Sigmoid colon (tissue), 7 donors: ENCODE measurements at regions of chr20 and their contacts with region 1.

Region 1: GRCh38 chr20:62143118-62143973 is at the starts of genes PSMA7 and SS18L1:
- DNase-seq: peak; percentile 93
- H3K4me3 ChIP-seq: peak within 1 kb of the TSS; percentile 71 to 92 (median 90)
- H3K27ac ChIP-seq: peak within 1 kb of the TSS; percentile 92 to 97 (median 96)
- H3K4me1 ChIP-seq: peaks cover 0 to 45% (median 36%) of the 10 kb centered on the region in 4 donors
- H3K27me3 ChIP-seq: no peaks in the 10 kb centered on the region
- CTCF ChIP-seq: no peak
- EP300 ChIP-seq: no peak
- POLR2A ChIP-seq: peak; percentile 58 to 73
- total RNA-seq, gene PSMA7: 192 to 388 (median 313) TPM
- total RNA-seq, gene SS18L1: 7.2 to 11.7 (median 11.1) TPM

Region 2: GRCh38 chr20:62065669-62066338 is 77.5 kb before region 1 on chr20 and contains the start of gene TAF4:
- intact Hi-C with region 1: loop called (anchors 2 kb)
- DNase-seq: peak; percentile 87
- H3K4me3 ChIP-seq: peak within 1 kb of the TSS; percentile 51 to 73 (median 72)
- H3K27ac ChIP-seq: peak within 1 kb of the TSS; percentile 85 to 91 (median 88)
- H3K4me1 ChIP-seq: peaks cover 0 to 59% (median 49%) of the 10 kb centered on the region in 4 donors
- H3K27me3 ChIP-seq: no peaks in the 10 kb centered on the region
- CTCF ChIP-seq: no peak
- EP300 ChIP-seq: no peak
- POLR2A ChIP-seq: no peak
- total RNA-seq, gene TAF4: 8.0 to 13.3 (median 10.9) TPM

Region 3: DNA sequence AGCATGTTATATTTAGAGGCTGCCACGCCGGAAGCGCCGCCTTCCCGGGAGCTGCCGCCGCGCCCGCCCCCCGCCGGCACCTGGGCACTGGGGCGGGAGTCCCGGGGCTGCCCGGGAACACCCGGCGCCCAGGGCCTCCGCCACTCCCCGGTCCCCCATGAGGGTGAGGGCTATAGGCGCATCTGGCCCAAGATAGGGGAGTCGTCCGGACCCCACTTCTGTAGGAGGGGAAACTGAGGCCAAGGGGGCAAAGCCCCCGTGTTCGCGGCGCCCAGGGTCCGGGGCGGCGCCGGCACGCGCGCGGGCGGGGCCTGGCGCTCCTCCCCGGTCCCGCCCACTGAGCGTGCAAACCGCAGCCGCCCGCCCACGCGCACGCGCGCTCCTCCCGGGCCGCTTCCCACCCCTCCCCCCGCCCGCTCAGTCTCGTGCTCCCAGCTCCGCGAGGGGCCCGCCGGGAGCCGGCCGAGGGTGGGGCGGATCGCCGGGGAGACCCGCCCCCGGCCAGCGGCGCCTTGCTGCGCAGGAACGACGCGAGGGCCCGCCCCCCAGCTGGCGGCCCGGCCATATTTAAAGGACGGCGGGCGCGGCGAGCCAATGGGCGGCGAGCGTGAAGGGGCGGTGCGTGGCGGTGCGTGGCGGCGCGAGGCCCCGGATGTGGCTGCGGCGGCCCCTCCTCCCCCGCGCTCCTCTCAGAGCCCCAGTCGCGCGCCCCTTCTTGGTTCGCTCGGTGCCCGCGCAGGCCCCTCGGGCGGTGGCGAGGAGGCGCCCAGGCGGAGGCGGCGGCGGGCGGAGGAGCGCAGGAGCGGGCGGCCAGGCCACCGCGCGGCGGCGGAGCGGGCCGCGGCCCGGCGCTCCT is 21.3 kb before region 1 on chr20 and contains the start of gene LSM14B:
- intact Hi-C with region 1: loop called (anchors 1 kb)
- DNase-seq: peak; percentile 98
- H3K4me3 ChIP-seq: peak within 1 kb of the TSS; percentile 76 to 89 (median 87)
- H3K27ac ChIP-seq: peak within 1 kb of the TSS; percentile 91 to 98 (median 97)
- H3K4me1 ChIP-seq: peaks cover 0 to 23% (median 21%) of the 10 kb centered on the region in 4 donors
- H3K27me3 ChIP-seq: peaks cover 0 to 19% (median 0%) of the 10 kb centered on the region in 3 donors
- CTCF ChIP-seq: no peak
- EP300 ChIP-seq: peak in 1 of 4 donors; percentile 25
- POLR2A ChIP-seq: no peak
- total RNA-seq, gene LSM14B: 20.8 to 28.5 (median 23.6) TPM

Region 4: DNA sequence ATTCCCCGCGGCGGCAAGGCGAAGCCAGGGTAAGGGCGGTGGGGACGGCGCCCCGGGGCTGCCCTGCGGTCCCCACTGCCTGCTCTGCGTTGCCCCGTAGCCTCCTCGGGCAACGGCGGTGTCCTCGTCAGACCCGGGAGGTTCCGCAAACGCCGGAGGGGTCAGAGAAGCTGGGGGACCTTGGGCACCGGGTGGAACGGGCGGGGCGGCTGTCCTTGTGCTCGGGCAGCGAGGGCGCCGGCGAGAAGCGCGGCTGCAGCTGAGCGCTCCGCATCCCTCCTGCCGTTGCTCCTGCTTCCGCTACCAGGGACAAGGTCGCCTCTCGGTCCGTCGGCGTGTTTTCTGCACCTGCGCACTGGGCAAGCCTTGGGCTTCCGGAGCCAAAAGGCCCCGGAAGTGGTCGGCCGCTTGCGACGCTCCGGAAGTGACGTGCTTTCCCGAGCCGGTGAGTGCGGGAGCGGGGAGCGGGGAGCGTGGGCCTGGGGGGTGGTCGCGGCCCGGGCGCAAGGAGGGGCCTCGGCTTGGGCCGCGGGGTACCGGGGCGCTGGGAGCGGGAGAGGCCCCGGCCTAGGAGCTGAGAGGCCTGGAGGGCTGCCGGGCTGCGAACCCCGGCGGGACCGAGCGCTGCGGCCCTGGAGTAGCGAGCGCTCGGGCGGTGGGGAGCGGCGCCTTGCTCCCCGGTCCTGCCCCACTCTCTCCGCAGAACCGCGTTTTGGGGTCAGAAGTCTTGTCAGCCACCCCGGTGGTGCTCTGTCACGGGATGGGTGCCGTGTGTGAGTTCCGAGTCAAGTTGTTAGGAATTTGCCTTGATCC is 39.5 kb after region 1 on chr20 and contains the start of gene MTG2:
- intact Hi-C with region 1: loop called (anchors 1 kb)
- DNase-seq: peak; percentile 97
- H3K4me3 ChIP-seq: peak within 1 kb of the TSS; percentile 61 to 92 (median 84)
- H3K27ac ChIP-seq: peak within 1 kb of the TSS; percentile 91 to 96 (median 94)
- H3K4me1 ChIP-seq: peaks cover 0 to 25% (median 19%) of the 10 kb centered on the region in 4 donors
- H3K27me3 ChIP-seq: no peaks in the 10 kb centered on the region
- CTCF ChIP-seq: no peak
- EP300 ChIP-seq: peak in 1 of 4 donors; percentile 51
- POLR2A ChIP-seq: peak; percentile 83 to 87
- total RNA-seq, gene MTG2: 13.3 to 28.1 (median 21.2) TPM

Region 5: DNA sequence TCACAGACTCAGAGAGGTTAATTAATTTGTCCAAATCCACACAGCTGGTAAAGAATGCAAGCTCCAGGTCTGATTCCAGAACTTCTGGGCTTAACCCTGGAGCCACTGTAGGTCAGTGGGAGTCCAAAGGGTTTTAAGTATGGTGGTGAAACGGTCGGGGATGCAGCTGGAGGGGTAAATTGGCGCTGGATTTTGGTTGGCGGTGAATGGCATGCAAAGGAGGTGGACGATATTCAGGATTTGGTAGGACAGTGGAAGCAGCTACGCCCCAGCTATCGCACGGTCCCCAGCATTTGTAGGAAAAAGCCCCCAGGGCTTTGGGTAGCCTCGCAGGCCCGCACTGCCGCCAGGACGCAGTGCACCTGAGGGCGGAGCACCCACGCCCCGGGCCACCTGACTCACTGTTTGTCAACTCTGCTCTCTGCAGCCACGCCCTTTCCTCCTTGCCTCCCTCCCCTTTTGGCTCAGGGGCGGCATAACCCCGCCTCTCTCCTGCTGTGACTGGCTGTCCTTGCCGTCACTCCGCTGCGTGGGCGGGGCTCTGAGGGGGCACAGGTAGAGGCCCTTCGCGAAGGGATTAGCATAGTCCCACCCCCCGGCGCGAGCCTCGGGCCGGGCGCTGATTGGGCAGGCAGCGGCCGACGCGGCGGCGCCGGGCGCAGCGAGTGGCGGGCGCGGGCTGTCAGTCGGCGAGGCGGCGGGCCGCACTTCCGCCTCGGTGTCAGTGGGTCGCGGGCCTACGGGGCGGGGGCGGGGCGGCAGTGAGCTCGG is 94.6 kb after region 1 on chr20 and contains the start of gene OSBPL2:
- intact Hi-C with region 1: loop called (anchors 5 kb)
- DNase-seq: peak; percentile 100
- H3K4me3 ChIP-seq: peak within 1 kb of the TSS; percentile 62 to 96 (median 94)
- H3K27ac ChIP-seq: peak within 1 kb of the TSS; percentile 81 to 87 (median 85)
- H3K4me1 ChIP-seq: peaks cover 0 to 21% (median 20%) of the 10 kb centered on the region in 4 donors
- H3K27me3 ChIP-seq: peaks cover 0 to 9% (median 5%) of the 10 kb centered on the region in 3 donors
- CTCF ChIP-seq: no peak
- EP300 ChIP-seq: no peak
- POLR2A ChIP-seq: no peak
- total RNA-seq, gene OSBPL2: 31.6 to 36.8 (median 32.6) TPM

Region 6: GRCh38 chr20:62386383-62387218 is 243.3 kb after region 1 on chr20 and contains the start of gene RPS21:
- intact Hi-C with region 1: loop called (anchors 10 kb)
- DNase-seq: peak; percentile 97
- H3K4me3 ChIP-seq: peak within 1 kb of the TSS; percentile 84 to 100 (median 94)
- H3K27ac ChIP-seq: peak within 1 kb of the TSS; percentile 91 to 99 (median 96)
- H3K4me1 ChIP-seq: peaks cover 0 to 34% (median 30%) of the 10 kb centered on the region in 4 donors
- H3K27me3 ChIP-seq: no peaks in the 10 kb centered on the region
- CTCF ChIP-seq: no peak
- EP300 ChIP-seq: peak in 1 of 4 donors; percentile 46
- POLR2A ChIP-seq: peak; percentile 77 to 81
- total RNA-seq, gene RPS21: 2,383 to 8,235 (median 5,456) TPM